ENCODE measurements at regions of chr12 and their contacts with region 1.

Region 1: GRCh38 chr12:65169320-65170208 is at the start of gene LEMD3:
- DNase-seq: peak; percentile 93 to 94
- ATAC-seq: peak; percentile 96 to 98 (median 97)
- H3K4me3 ChIP-seq: peak within 1 kb of the TSS; percentile 86
- H3K27ac ChIP-seq: peak within 1 kb of the TSS; percentile 93
- H3K4me1 ChIP-seq: peaks cover 42% of the 10 kb centered on the region
- H3K27me3 ChIP-seq: no peaks in the 10 kb centered on the region
- CTCF ChIP-seq: no peak
- total RNA-seq, gene LEMD3: 10.4 to 17.1 (median 12.6) TPM

Region 2: DNA sequence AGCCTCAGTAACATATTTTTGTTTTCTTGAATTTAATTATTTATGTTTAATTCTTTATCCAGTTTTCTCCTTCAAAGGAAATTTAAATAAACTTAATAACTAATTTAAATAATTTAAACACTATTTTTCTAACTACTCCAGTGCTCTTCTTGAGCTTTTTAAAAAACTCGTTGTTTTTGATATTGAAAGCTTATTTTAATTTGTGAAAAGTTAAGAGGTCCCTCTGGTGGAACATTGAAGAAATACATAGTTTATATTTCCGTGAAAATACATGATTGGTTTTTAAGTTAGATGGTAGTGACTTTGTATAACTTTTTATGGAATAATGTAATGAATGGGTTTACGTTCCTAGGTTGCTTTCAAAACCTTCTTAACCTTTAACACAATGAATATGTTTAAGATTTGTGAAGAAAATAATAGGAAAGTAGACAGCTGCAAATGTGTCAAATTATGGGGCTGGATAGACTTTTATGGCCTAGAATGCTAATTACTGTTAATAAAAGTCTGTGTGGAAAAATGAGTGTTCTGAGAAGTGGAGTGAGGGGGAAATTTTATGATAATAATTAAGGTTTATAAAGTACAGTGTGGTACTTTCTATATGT is 63.0 kb after region 1 on chr12:
- intact Hi-C with region 1: loop called in 1 of 2 experiments (anchors 5 kb)
- DNase-seq: no peak
- ATAC-seq: no peak
- H3K4me3 ChIP-seq: no peak overlapping the region
- H3K27ac ChIP-seq: no peak overlapping the region
- H3K4me1 ChIP-seq: peaks cover 5% of the 10 kb centered on the region
- H3K27me3 ChIP-seq: no peaks in the 10 kb centered on the region
- CTCF ChIP-seq: peak; percentile 49

Region 3: DNA sequence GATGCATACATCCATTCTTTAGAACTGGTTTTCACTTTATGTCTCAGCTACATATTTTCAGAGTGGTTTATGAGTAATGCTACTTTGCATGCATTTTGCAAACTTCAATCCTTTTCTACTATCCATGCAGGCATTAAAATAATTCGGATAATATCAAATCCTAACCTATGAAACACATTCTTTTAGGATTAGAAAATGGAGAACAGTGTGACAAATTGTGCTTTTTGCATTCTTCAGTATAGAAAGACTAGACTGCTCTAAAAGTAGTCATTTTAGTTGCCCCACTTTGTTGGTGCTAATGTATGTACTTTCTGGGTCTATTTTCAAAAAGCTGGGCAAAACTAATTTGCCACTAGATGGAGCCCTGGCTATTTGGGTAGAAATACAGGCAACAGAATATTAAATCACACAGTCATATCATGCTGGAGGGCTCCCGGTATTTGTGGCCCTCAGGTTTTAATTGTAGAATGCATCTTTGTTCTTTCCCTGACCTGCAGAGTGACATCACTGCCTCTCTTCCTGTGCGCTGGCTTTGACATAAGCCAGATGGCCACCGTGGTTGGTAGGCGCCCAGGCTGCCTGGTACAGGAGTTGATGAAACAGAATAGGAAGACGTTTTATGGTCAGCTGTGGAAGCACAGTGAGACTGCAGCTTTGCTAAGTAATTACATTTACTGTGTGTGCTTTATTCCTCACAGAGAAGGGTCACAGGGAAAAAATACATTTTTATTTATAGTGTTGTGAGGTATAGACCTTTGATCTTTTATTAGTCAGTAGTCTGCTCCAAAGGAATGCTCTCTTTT is 137.0 kb after region 1 on chr12:
- intact Hi-C with region 1: no loop called
- DNase-seq: peak in 1 of 2 donors; percentile 15
- ATAC-seq: peak; percentile 55 to 78 (median 63)
- H3K4me3 ChIP-seq: no peak overlapping the region
- H3K27ac ChIP-seq: no peak overlapping the region
- H3K4me1 ChIP-seq: peaks cover 24% of the 10 kb centered on the region
- H3K27me3 ChIP-seq: no peaks in the 10 kb centered on the region
- CTCF ChIP-seq: peak; percentile 47

Measured in psoas muscle (tissue), 8 donors.